Naive thymus-derived CD4-positive, alpha-beta T cell (primary cell): ENCODE measurements at regions of chr19 and their contacts with region 1.

Region 1: DNA sequence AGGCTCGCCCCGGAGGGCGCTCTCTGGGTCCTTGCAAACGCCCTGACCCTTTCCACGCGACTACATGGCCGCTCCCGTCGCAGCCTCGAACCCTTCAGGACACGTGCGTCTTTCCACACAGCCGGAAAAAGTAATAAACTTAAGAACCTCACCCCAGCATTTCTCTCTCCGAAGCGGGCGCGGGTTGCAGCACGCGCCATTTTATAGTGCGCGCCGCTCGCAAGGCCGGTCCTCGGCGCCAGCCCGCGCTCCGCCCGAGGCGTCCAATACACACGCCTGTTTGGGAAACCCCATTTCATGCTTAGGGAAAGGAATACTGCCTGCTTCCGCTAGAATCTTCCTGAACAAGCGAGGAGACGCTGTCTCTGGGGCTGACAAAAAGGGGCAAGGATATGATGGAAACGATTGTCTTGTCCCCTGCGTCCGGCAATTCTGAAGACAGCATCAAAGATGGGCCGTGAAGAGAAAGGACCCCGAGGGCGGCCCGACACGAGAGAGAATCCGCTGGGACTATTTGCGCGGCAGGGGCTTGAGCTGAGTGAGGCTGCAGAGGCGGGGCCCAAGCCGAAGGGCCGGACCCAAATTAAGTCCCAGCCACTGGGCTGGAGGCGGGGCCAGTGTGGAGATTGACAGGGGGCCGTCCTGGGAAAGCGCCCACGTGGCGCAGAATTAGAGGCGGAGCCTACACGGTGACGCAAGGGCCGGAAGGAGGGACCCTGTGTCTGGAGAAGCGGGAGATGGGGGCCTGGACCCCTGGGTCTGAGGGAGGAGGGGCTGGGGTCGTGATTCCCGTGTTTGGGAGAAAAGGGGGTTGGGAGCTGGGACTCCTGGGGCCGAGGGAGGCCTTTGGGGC is 14.4 kb downstream of the ACP4 start:
- DNase-seq: peak; percentile 87 to 99 (median 98)
- ATAC-seq: peak; percentile 98
- H3K4me3 ChIP-seq: peak overlapping the region; percentile 97
- H3K4me3 Mint-ChIP-seq: peak overlapping the region; percentile 92 to 100 (median 96)
- H3K27ac ChIP-seq: peak overlapping the region; percentile 97
- H3K27ac Mint-ChIP-seq: peak overlapping the region; percentile 97 to 100 (median 100)
- H3K4me1 ChIP-seq: peaks cover 15 to 19% of the 10 kb centered on the region in 2 donors
- H3K4me1 Mint-ChIP-seq: peaks cover 21 to 50% (median 42%) of the 10 kb centered on the region in 7 donors
- H3K27me3 ChIP-seq: no peaks in the 10 kb centered on the region
- H3K27me3 Mint-ChIP-seq: no peaks in the 10 kb centered on the region

Region 2: DNA sequence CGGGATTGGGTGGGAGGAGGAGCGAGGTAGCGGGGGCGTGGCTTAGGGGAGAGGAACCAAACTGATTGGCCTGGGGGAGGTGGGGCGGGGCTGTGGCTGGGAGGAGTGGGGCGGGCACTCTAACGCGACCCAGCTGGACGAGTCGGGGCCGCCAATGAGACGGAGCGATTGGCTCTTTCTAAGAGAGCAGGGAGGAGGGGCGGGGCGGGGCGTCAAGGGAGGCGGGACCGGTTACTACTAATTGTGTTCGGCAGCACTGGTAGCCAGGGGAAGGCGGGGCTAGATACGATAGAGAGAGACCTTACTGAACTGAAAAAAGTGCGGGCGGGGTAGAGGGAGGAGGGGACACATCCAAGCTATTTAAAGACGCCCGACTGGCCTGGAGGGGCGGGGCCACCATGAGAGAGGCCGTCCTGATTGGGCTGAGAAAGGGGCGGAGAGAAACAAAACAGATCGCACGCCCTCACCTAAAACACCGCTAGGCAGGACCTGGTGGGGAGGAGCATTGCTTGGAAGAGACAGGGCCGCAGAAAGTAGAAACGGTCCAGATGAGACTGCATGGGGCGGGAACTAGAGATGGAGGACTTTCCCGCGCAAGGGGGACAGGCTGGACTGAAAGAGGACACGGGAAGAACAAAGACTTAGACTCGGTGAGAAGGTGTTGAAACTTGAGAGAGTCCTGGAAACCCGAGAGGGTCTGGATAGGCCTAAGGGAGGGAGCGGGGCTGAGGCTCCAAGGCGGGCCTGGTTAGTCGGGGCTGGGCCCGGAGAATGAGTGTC is 475.3 kb before region 1 on chr19 and contains the start of gene KCNC3:
- CTCF ChIA-PET with region 1: no interaction called
- POLR2A ChIA-PET with region 1: no interaction called
- intact Hi-C with region 1: loop called (anchors 1 to 2 kb)
- DNase-seq: peak in 8 of 9 donors; percentile 69 to 96 (median 86)
- ATAC-seq: peak; percentile 77
- H3K4me3 ChIP-seq: peak within 1 kb of the TSS; percentile 39
- H3K4me3 Mint-ChIP-seq: peak within 1 kb of the TSS; percentile 72 to 97 (median 86)
- H3K27ac ChIP-seq: no peak within 1 kb of the TSS
- H3K27ac Mint-ChIP-seq: peak within 1 kb of the TSS; percentile 55 to 96 (median 87)
- H3K4me1 ChIP-seq: peaks cover 42 to 62% of the 10 kb centered on the region in 2 donors
- H3K4me1 Mint-ChIP-seq: peaks cover 43 to 75% (median 73%) of the 10 kb centered on the region in 7 donors
- H3K27me3 ChIP-seq: peaks cover 15 to 28% of the 10 kb centered on the region in 2 donors
- H3K27me3 Mint-ChIP-seq: peaks cover 20 to 62% (median 41%) of the 10 kb centered on the region in 5 donors
- total RNA-seq, gene KCNC3: 1.9 to 11.1 (median 2.4) TPM

Region 3: DNA sequence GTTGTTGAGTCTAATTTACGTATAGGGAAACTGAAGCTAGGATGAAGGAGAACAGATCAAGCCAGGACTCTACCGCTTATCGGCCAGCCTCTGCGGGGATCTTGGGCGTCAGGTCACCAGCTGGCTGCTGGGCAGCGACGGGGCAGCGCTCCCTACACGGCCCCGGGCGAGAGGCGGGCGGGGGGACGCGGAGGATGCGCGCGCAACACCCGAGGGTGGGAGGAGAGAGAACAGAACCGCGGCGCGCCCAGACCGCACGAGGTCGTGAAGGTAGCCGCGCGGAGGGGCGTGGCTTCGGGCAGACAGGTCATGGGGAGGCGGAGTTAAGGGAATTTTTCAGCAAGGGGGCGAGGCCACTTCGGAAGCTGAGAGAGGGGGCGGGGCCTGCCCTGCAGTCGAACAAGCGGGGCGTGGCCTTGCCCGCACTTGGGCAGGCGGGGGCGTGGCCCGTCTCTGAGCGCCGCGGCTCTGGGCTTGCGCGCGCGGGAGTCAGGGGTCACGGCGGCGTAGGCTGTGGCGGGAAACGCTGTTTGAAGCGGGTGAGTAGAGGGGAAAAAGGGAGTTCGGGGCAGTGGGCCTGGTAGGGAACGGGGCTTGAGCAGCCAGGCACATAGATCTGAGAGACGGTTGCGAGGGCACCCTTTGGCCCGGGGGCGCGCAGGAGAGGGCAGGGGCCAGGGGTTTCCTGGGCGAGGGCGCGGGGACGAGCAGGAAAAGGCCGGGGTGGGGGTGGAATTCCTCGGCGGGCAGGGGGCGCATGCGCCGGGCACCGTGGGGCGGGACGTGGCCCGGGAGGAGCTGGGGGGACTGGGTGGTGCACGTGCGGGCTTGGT is 420.6 kb before region 1 on chr19 and contains the start of gene POLD1:
- CTCF ChIA-PET with region 1: no interaction called
- POLR2A ChIA-PET with region 1: interaction called, 4 read pairs
- intact Hi-C with region 1: loop called in 1 of 2 experiments (anchors 1 kb)
- DNase-seq: peak; percentile 98 to 100 (median 99)
- ATAC-seq: peak; percentile 96
- H3K4me3 ChIP-seq: peak within 1 kb of the TSS; percentile 74
- H3K4me3 Mint-ChIP-seq: peak within 1 kb of the TSS; percentile 91 to 99 (median 94)
- H3K27ac ChIP-seq: peak within 1 kb of the TSS; percentile 75
- H3K27ac Mint-ChIP-seq: peak within 1 kb of the TSS; percentile 80 to 97 (median 94)
- H3K4me1 ChIP-seq: peaks cover 3 to 7% of the 10 kb centered on the region in 2 donors
- H3K4me1 Mint-ChIP-seq: peaks cover 16 to 51% (median 35%) of the 10 kb centered on the region in 7 donors
- H3K27me3 ChIP-seq: no peaks in the 10 kb centered on the region
- H3K27me3 Mint-ChIP-seq: no peaks in the 10 kb centered on the region
- total RNA-seq, gene POLD1: 26.0 to 110 (median 40.8) TPM

Region 4: DNA sequence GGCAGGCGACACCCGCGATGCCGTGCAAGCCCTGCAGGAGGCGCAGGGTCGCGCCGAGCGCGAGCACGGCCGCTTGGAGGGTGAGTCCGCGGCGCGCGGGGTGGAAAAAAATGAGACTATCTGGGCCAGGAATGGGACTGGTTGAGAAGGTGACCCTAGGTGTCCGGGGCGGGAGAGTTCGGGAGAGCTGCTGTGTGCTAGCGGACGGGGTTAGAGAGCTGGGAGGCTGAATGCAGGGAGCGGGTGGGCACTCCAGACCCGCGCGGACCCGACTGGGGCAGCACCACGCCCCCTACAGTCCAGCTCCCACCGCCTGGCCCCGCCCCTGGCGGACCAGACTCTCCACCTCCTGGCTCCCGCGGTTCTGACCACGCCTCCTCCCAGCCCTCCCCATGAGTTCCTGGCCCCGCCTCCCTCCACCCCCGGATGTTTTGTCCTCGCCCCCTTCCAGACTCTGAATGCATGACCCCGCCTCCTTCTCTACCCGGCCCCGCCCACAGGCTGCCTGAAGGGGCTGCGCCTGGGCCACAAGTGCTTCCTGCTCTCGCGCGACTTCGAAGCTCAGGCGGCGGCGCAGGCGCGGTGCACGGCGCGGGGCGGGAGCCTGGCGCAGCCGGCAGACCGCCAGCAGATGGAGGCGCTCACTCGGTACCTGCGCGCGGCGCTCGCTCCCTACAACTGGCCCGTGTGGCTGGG is 80.0 kb before region 1 on chr19:
- CTCF ChIA-PET with region 1: interaction called, 4 read pairs
- POLR2A ChIA-PET with region 1: no interaction called
- intact Hi-C with region 1: loop called (anchors 1 kb)
- DNase-seq: peak; percentile 74 to 99 (median 94)
- ATAC-seq: peak; percentile 93
- H3K4me3 ChIP-seq: peak overlapping the region; percentile 62
- H3K4me3 Mint-ChIP-seq: peak overlapping the region; percentile 79 to 92 (median 84)
- H3K27ac ChIP-seq: peak overlapping the region; percentile 66
- H3K27ac Mint-ChIP-seq: peak overlapping the region in 8 of 9 donors; percentile 34 to 87 (median 70)
- H3K4me1 ChIP-seq: peaks cover 5 to 12% of the 10 kb centered on the region in 2 donors
- H3K4me1 Mint-ChIP-seq: peaks cover 0 to 34% (median 24%) of the 10 kb centered on the region in 7 donors
- H3K27me3 ChIP-seq: peaks cover 5 to 12% of the 10 kb centered on the region in 2 donors
- H3K27me3 Mint-ChIP-seq: peaks cover 47 to 70% (median 53%) of the 10 kb centered on the region in 5 donors

Region 5: GRCh38 chr19:50922317-50922853 is 117.7 kb after region 1 on chr19:
- CTCF ChIA-PET with region 1: no interaction called
- POLR2A ChIA-PET with region 1: no interaction called
- intact Hi-C with region 1: loop called (anchors 5 to 10 kb)
- DNase-seq: peak; percentile 47 to 79 (median 66)
- ATAC-seq: peak; percentile 96
- H3K4me3 ChIP-seq: no peak overlapping the region
- H3K4me3 Mint-ChIP-seq: peak overlapping the region in 1 of 10 donors; percentile 27
- H3K27ac ChIP-seq: no peak overlapping the region
- H3K27ac Mint-ChIP-seq: no peak overlapping the region
- H3K4me1 ChIP-seq: no peaks in the 10 kb centered on the region
- H3K4me1 Mint-ChIP-seq: peaks cover 2 to 10% (median 8%) of the 10 kb centered on the region in 7 donors
- H3K27me3 ChIP-seq: peaks cover 0 to 3% of the 10 kb centered on the region in 2 donors
- H3K27me3 Mint-ChIP-seq: peaks cover 28 to 53% (median 45%) of the 10 kb centered on the region in 5 donors

Region 6: GRCh38 chr19:51703575-51704515 is 899.2 kb after region 1 on chr19:
- CTCF ChIA-PET with region 1: no interaction called
- POLR2A ChIA-PET with region 1: no interaction called
- intact Hi-C with region 1: loop called in 1 of 2 experiments (anchors 10 kb)
- DNase-seq: peak; percentile 95 to 98 (median 97)
- ATAC-seq: peak; percentile 98
- H3K4me3 ChIP-seq: peak overlapping the region; percentile 98
- H3K4me3 Mint-ChIP-seq: peak overlapping the region; percentile 82 to 92 (median 90)
- H3K27ac ChIP-seq: peak overlapping the region; percentile 99
- H3K27ac Mint-ChIP-seq: peak overlapping the region; percentile 87 to 95 (median 91)
- H3K4me1 ChIP-seq: peaks cover 3 to 9% of the 10 kb centered on the region in 2 donors
- H3K4me1 Mint-ChIP-seq: peaks cover 29 to 50% (median 43%) of the 10 kb centered on the region in 7 donors
- H3K27me3 ChIP-seq: no peaks in the 10 kb centered on the region
- H3K27me3 Mint-ChIP-seq: peaks cover 0 to 7% (median 0%) of the 10 kb centered on the region in 5 donors